Transverse colon (tissue), 4 donors: ENCODE measurements at regions of chr14 and their contacts with region 1.

Region 1: DNA sequence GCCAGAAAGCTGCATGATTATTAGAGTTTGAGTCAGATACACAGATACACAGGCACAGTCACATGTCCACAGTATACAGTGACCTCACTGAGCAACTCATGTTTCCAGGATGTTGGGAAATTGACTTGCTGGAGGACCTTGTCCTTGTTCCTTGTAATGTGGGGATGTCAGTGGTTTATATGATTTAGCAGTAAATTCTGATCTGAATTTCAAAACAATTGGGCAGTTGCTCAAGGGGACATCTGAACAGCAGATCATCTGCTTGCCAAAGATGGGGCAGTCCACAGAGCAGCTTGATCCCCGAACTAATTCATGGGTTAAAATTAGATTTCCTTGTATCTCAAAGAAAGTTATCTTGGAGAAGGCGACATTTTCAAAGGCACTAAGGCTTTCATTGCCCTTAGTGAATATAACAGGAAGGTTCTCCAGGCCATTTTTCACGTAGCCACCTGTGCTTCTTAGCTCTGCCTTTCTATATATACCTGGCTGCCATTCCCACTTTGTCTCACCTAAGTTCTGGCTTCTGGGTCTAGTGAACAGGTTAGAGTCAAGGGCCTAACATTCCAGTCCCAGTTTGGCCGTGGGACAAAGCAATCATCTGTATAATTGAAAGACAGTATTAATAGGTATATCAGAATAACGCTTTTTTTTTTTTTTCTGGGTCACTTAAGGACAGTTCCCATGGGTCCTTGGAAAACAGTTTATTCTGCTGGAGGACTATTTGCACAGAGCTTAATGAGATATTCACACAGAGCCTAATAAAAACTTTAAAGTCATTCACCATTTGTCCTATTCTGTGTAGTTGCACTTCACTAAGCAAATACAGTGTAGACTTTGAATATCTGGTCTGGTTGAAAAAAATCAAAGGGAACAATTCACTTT is 64.9 kb upstream of the STRN3 start:
- DNase-seq: peak; percentile 20
- H3K4me3 ChIP-seq: no peak overlapping the region
- H3K27ac ChIP-seq: peak overlapping the region; percentile 46 to 81 (median 66)
- H3K4me1 ChIP-seq: peaks cover 0 to 20% (median 13%) of the 10 kb centered on the region in 4 donors
- H3K27me3 ChIP-seq: no peaks in the 10 kb centered on the region
- CTCF ChIP-seq: no peak
- EP300 ChIP-seq: no peak
- POLR2A ChIP-seq: no peak

Region 2: GRCh38 chr14:30994681-30995620 is 96.2 kb before region 1 on chr14:
- in situ Hi-C with region 1: loop called in 1 of 4 experiments (anchors 25 kb)
- intact Hi-C with region 1: no loop called
- DNase-seq: no peak
- H3K4me3 ChIP-seq: no peak overlapping the region
- H3K27ac ChIP-seq: no peak overlapping the region
- H3K4me1 ChIP-seq: peaks cover 11 to 44% (median 21%) of the 10 kb centered on the region in 4 donors
- H3K27me3 ChIP-seq: no peaks in the 10 kb centered on the region
- CTCF ChIP-seq: no peak
- EP300 ChIP-seq: no peak
- POLR2A ChIP-seq: no peak

Region 3: GRCh38 chr14:31059152-31059924 is 31.8 kb before region 1 on chr14:
- in situ Hi-C with region 1: no loop called
- intact Hi-C with region 1: loop called (anchors 1 kb)
- DNase-seq: peak; percentile 21
- H3K4me3 ChIP-seq: no peak overlapping the region
- H3K27ac ChIP-seq: peak overlapping the region in 3 of 4 donors; percentile 21 to 29 (median 25)
- H3K4me1 ChIP-seq: peaks cover 4 to 17% (median 14%) of the 10 kb centered on the region in 4 donors
- H3K27me3 ChIP-seq: no peaks in the 10 kb centered on the region
- CTCF ChIP-seq: no peak
- EP300 ChIP-seq: no peak
- POLR2A ChIP-seq: no peak

Region 4: GRCh38 chr14:31449971-31450610 is 359.0 kb after region 1 on chr14:
- in situ Hi-C with region 1: no loop called
- intact Hi-C with region 1: no loop called
- DNase-seq: no peak
- H3K4me3 ChIP-seq: no peak overlapping the region
- H3K27ac ChIP-seq: no peak overlapping the region
- H3K4me1 ChIP-seq: no peaks in the 10 kb centered on the region
- H3K27me3 ChIP-seq: no peaks in the 10 kb centered on the region
- CTCF ChIP-seq: peak; percentile 32 to 58 (median 39)
- EP300 ChIP-seq: no peak
- POLR2A ChIP-seq: no peak